Left lung (tissue), 14 donors: ENCODE measurements at regions of chr9 and their contacts with region 1.

Region 1: DNA sequence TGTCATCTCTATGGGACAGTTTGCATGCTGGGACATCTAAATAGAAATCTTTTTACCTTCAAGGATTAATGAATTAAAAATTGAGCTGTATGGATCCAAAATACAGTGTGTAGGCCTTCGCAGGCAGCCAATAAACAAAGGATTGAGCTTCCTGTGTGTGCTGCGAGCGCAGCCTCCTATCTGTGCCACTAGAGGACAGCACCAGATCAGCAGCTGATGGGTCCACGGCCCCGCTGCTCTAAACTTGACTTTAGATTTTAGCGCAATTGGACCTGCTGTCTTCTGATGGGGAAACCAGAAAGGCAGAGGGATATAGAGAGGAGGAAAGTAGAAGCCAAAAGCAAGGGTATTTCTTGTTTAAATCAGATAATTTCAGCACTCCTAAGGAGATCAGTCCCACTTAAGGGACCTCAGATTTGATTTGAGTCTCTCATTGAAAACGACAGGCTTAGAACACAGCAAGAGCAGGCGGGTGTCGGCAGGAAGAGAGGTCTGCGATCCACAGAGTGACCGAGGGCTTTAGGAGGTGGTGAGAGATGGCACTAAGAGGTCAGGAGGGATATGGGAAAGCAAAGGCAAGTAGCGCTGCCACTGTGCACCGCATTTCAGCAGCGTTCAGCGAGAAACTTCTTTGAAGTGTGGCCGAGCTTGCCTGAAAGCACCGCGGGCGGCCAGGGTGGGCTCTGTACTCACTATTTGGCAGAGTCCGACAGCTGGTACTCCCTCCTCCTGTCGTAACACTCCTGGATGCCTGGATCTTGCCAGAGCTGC is 214.3 kb downstream of the GNA14 start:
- DNase-seq: peak; percentile 49 to 83 (median 74)
- ATAC-seq: peak; percentile 97
- H3K4me3 ChIP-seq: no peak overlapping the region
- H3K27ac ChIP-seq: no peak overlapping the region
- H3K4me1 ChIP-seq: peaks cover 0 to 9% of the 10 kb centered on the region in 2 donors
- H3K27me3 ChIP-seq: no peaks in the 10 kb centered on the region
- CTCF ChIP-seq: peak; percentile 80 to 98

Region 2: DNA sequence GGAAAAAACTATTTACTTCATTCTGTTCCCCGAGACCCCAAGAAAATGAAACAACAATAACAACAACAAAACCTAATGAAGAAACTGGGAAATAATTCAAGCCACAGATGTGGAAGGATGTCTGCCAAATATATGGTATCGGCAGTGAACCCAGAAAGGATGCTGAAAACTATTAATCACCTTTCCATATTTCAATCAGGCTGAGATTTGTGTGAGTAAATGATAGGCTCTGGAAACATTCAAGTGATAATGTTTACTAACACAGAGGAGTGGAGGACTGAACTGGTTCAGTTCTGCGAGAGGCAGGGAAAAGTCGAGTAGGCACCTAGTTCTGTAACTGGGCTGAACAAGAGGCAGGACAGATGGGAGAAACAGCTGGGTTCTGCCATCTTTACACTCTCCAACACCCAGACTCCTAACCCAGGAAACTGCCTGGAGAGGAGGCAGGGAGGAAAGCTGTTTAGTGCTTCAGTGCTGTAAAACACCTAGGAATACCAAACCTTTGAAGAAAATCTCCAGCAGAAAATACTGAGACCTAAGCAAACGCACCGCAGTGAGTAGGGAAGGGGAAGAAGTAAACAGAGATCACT is 311.1 kb after region 1 on chr9:
- intact Hi-C with region 1: loop called in 1 of 2 experiments (anchors 5 kb)
- DNase-seq: peak in 2 of 4 donors; percentile 29 to 31
- ATAC-seq: no peak
- H3K4me3 ChIP-seq: no peak overlapping the region
- H3K27ac ChIP-seq: no peak overlapping the region
- H3K4me1 ChIP-seq: no peaks in the 10 kb centered on the region
- H3K27me3 ChIP-seq: no peaks in the 10 kb centered on the region
- CTCF ChIP-seq: no peak

Region 3: DNA sequence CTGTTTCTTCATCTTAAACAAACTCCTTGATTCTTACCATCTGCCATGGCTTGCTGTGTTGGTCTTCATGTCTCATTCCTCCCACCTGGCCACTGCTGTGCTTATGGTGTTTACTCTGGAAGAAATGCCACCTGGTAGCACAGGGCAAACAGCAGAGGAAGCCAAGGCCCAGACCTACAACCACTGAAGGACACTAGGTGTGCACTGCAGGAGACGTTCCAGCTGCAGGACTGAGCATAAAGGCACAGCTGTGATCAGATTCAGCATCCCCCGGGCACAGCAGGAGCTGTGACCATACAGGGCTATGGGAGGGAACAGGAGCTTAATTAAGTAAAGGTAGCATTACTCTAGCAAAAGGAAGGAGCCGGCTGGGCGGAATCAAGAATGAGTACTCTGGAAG is 610.3 kb after region 1 on chr9:
- intact Hi-C with region 1: loop called in 1 of 2 experiments (anchors 10 kb)
- DNase-seq: no peak
- ATAC-seq: no peak
- H3K4me3 ChIP-seq: no peak overlapping the region
- H3K27ac ChIP-seq: no peak overlapping the region
- H3K4me1 ChIP-seq: peaks cover 0 to 1% of the 10 kb centered on the region in 2 donors
- H3K27me3 ChIP-seq: no peaks in the 10 kb centered on the region
- CTCF ChIP-seq: no peak